ENCODE measurements at regions of chr17 and their contacts with region 1.

Region 1: DNA sequence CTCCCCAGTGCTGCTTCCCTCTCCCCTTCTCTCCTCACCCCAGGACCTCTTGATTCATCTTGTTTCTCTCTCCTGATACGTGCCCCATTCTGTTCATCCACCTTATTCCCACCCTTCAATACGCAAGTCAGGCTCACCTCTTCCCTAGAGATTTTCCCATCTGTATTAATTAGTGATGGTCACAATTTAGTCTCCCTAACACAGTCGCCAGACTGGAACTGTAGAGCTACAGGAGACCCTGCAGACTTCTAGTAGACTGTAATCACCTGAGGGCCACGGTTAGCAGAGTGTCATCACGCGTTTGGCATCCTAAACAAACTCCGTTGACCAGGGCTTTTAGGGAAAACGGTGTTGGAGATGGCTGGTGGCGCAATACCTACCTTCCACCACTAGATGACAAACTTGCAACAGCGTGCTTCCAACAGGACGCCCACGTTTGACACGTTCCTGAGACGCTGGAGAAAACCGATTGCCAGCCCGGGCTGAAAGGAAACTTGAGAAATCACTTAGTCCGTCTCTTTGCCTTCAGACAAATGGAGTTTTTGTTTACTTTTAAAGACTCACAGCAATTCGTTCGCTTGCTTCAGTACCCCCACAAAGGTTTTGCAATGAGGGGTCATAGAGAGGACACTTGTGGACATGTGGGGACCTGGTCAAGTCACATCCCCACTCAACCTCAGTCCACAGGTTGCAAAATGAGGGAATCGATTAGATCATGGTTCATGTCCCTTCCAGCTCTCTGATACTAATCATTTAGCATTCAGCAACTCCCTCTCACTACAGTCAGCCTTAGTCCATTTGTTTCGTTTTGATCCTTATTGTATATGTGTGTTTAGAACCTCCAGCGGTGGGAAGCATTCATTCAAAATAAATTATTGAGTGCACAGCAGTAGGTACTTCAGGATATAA is 20.6 kb downstream of the MYL4 start:
- DNase-seq: peak; percentile 86
- ATAC-seq: peak; percentile 92
- H3K4me3 ChIP-seq: peak overlapping the region; percentile 6 to 42 (median 35)
- H3K4me3 Mint-ChIP-seq: peak overlapping the region; percentile 77
- H3K27ac ChIP-seq: no peak overlapping the region
- H3K27ac Mint-ChIP-seq: peak overlapping the region; percentile 57
- H3K4me1 ChIP-seq: peaks cover 22 to 23% of the 10 kb centered on the region in 2 donors
- H3K4me1 Mint-ChIP-seq: peaks cover 28% of the 10 kb centered on the region
- H3K27me3 ChIP-seq: no peaks in the 10 kb centered on the region
- H3K27me3 Mint-ChIP-seq: no peaks in the 10 kb centered on the region
- CTCF ChIP-seq: peak; percentile 97

Region 2: DNA sequence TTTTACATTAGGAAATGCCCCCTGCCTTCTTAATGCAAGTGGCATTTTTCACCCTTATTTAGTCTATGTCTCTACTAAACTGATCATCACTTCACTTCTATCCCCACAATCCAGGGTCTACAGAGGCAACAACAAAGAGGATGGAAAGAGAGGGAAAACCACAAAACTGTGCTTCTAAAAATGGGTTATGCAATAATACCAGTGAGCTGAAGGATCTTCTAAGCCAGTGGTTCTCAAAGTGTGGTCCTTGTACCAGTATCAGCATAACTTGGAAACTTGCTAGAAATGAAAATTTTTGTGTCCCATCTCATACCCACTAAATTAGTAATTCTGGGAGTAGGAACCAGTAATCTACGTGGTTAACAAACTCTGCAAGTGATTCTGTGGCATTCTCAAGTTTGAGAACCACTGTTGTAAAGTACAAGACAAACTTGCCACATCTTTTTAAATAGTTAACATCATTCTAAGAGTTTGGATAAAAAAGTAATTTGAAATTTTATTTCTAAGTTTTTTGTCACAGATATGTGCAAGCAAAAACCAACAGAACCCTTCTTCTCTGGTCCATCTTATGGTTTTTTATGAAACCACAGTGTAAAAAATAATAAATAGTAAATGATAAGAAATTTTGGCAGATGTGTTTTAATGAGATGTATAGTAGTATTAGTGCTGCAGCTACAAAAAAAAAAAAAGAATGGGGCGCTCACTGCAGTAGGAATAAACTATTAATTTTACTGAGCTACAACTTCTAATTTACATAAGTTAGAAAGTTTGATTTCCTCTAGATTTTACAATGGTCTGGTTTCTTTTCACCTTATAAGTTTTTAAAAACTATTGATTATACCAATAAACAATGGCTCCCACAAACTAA is 56.9 kb before region 1 on chr17:
- CTCF ChIA-PET with region 1: no interaction called
- POLR2A ChIA-PET with region 1: no interaction called
- intact Hi-C with region 1: no loop called
- DNase-seq: no peak
- ATAC-seq: no peak
- H3K4me3 ChIP-seq: no peak overlapping the region
- H3K4me3 Mint-ChIP-seq: no peak overlapping the region
- H3K27ac ChIP-seq: no peak overlapping the region
- H3K27ac Mint-ChIP-seq: no peak overlapping the region
- H3K4me1 ChIP-seq: peaks cover 15 to 18% of the 10 kb centered on the region in 2 donors
- H3K4me1 Mint-ChIP-seq: peaks cover 38% of the 10 kb centered on the region
- H3K27me3 ChIP-seq: no peaks in the 10 kb centered on the region
- H3K27me3 Mint-ChIP-seq: no peaks in the 10 kb centered on the region
- CTCF ChIP-seq: no peak

Region 3: DNA sequence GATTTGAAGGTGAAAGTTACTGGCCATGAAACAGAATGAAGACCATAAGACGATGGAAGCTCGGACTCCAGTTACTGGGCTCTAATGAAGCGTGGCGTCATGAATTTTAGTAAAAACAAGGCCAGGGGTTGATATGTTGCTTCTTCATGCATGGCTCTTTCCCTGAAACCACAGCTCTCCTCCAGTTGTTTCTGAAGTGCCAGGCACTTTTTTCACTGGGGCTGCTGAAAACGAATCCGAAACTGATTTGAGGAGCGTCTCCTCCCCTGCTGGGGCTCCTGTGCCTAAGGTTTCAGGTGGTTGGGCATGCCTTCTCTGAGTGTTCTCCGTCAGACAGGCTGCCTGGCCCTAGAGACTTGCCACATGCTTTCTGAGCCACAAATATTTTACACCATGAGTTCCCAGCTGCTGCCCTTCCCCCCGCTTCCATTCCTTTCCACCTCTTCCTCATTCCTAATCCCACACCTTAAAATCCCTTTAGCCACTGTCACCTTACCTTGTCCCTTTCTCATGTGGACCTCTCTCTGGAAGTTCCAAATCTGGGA is 24.3 kb before region 1 on chr17:
- CTCF ChIA-PET with region 1: interaction called, 23 read pairs
- POLR2A ChIA-PET with region 1: no interaction called
- intact Hi-C with region 1: no loop called
- DNase-seq: peak; percentile 87
- ATAC-seq: peak; percentile 69
- H3K4me3 ChIP-seq: peak overlapping the region; percentile 30 to 56 (median 45)
- H3K4me3 Mint-ChIP-seq: peak overlapping the region; percentile 87
- H3K27ac ChIP-seq: peak overlapping the region; percentile 96 to 97
- H3K27ac Mint-ChIP-seq: peak overlapping the region; percentile 99
- H3K4me1 ChIP-seq: peaks cover 67 to 74% of the 10 kb centered on the region in 2 donors
- H3K4me1 Mint-ChIP-seq: peaks cover 73% of the 10 kb centered on the region
- H3K27me3 ChIP-seq: no peaks in the 10 kb centered on the region
- H3K27me3 Mint-ChIP-seq: no peaks in the 10 kb centered on the region
- CTCF ChIP-seq: no peak

Region 4: GRCh38 chr17:47239619-47240374 is 10.0 kb after region 1 on chr17:
- CTCF ChIA-PET with region 1: interaction called, 17 read pairs
- POLR2A ChIA-PET with region 1: no interaction called
- intact Hi-C with region 1: no loop called
- DNase-seq: no peak
- ATAC-seq: peak; percentile 33
- H3K4me3 ChIP-seq: no peak overlapping the region
- H3K4me3 Mint-ChIP-seq: no peak overlapping the region
- H3K27ac ChIP-seq: no peak overlapping the region
- H3K27ac Mint-ChIP-seq: no peak overlapping the region
- H3K4me1 ChIP-seq: peaks cover 25 to 26% of the 10 kb centered on the region in 2 donors
- H3K4me1 Mint-ChIP-seq: peaks cover 28% of the 10 kb centered on the region
- H3K27me3 ChIP-seq: no peaks in the 10 kb centered on the region
- H3K27me3 Mint-ChIP-seq: no peaks in the 10 kb centered on the region
- CTCF ChIP-seq: no peak

Region 5: DNA sequence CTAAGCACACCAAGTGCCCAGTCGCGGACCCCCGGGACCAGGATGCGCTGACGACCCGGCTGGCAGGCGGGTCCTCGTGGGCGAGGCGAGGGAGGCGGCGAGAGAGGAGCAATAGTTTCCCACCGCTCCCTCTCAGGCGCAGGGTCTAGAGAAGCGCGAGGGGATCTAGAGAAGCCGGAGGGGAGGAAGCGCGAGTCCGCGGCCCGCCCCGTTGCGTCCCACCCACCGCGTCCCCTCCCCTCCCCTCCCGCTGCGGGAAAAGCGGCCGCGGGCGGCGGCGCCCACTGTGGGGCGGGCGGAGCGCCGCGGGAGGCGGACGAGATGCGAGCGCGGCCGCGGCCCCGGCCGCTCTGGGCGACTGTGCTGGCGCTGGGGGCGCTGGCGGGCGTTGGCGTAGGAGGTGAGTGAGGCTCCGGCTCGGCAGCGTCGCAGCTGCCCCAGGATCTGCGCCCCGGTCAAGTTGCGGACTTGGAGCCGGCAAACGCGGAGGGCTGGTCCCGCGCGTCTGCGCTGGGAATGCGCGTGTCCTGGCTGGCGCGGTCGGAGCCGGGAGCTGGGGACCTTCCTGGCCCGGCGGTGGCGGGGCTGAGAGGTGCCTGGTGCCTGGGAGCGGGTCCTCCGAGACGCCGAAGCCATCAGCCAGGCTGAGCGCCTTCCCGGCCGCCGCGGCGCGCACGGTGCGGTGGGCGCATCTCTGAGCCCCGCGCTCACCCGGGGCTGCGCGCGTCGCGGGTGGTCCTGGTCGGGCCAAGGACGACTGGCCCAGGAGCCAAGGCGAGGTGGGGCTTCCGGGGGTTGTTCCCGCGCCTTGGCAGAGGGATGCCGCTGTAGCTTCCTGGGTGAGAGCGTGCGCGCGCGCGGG is 24.0 kb after region 1 on chr17 and contains the start of gene ITGB3:
- CTCF ChIA-PET with region 1: interaction called, 22 read pairs
- POLR2A ChIA-PET with region 1: no interaction called
- intact Hi-C with region 1: loop called (anchors 1 kb)
- DNase-seq: peak; percentile 88
- ATAC-seq: peak; percentile 98
- H3K4me3 ChIP-seq: peak within 1 kb of the TSS in 4 of 5 experiments; percentile 54 to 71 (median 62)
- H3K4me3 Mint-ChIP-seq: peak within 1 kb of the TSS; percentile 94
- H3K27ac ChIP-seq: no peak within 1 kb of the TSS
- H3K27ac Mint-ChIP-seq: peak within 1 kb of the TSS; percentile 61
- H3K4me1 ChIP-seq: peaks cover 4 to 18% of the 10 kb centered on the region in 2 donors
- H3K4me1 Mint-ChIP-seq: peaks cover 17% of the 10 kb centered on the region
- H3K27me3 ChIP-seq: peaks cover 0 to 11% (median 3%) of the 10 kb centered on the region in 4 experiments
- H3K27me3 Mint-ChIP-seq: peaks cover 7% of the 10 kb centered on the region
- CTCF ChIP-seq: peak; percentile 67
- total RNA-seq, gene ITGB3: 11.4 and 14.2 TPM in 2 replicates